ENCODE measurements at regions of chr3 and their contacts with region 1.

Region 1: GRCh38 chr3:128698211-128699064 is 27.5 kb upstream of the RAB7A start:
- DNase-seq: peak in 5 of 9 experiments; percentile 15 to 56 (median 27)
- ATAC-seq: peak; percentile 61
- H3K4me3 ChIP-seq: peak overlapping the region; percentile 47 to 58
- H3K4me3 Mint-ChIP-seq: peak overlapping the region; percentile 79
- H3K27ac ChIP-seq: no peak overlapping the region
- H3K27ac Mint-ChIP-seq: no peak overlapping the region
- H3K4me1 ChIP-seq: no peaks in the 10 kb centered on the region
- H3K4me1 Mint-ChIP-seq: peaks cover 3% of the 10 kb centered on the region
- H3K27me3 ChIP-seq: peaks cover 0 to 11% of the 10 kb centered on the region in 2 experiments
- H3K27me3 Mint-ChIP-seq: peaks cover 4% of the 10 kb centered on the region
- CTCF ChIP-seq: no peak

Region 2: DNA sequence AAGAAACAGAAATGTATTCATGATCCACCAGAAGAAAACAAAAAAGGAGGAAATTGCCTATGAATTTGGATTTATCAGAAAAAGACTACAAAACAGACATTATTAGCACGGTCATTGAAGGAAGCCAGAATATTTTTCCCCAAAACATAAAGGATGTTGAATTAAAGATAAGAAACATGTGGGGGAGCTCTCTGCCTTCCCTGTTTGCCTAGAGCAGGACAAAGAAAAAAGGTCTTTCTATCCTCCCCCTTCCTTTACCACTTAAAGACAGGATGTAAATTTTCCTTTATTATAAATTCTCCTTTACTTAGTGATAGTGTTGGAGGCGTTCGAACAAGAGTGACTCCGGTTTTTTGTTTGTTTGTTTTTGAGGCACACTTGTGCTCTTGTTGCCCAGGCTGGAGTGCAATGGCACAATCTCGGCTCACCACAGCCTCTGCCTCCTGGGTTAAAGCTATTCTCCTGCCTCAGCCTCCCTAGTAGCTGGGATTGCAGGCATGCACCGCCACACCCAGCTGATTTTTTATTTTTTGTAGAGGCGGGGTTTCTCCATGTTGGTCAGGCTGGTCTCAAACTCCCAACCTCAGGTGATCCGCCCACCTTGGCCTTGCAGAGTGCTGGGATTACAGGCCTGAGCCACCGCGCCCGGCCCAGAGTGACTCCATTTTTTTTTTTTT is 32.9 kb before region 1 on chr3:
- CTCF ChIA-PET with region 1: no interaction called
- POLR2A ChIA-PET with region 1: no interaction called
- intact Hi-C with region 1: loop called in 1 of 2 experiments (anchors 1 kb)
- DNase-seq: no peak
- ATAC-seq: no peak
- H3K4me3 ChIP-seq: no peak overlapping the region
- H3K4me3 Mint-ChIP-seq: no peak overlapping the region
- H3K27ac ChIP-seq: no peak overlapping the region
- H3K27ac Mint-ChIP-seq: no peak overlapping the region
- H3K4me1 ChIP-seq: no peaks in the 10 kb centered on the region
- H3K4me1 Mint-ChIP-seq: no peaks in the 10 kb centered on the region
- H3K27me3 ChIP-seq: no peaks in the 10 kb centered on the region
- H3K27me3 Mint-ChIP-seq: no peaks in the 10 kb centered on the region
- CTCF ChIP-seq: no peak